ENCODE measurements at regions of chr5 and their contacts with region 1.

Region 1: GRCh38 chr5:13957032-13957645 is 12.7 kb upstream of the DNAH5 start:
- DNase-seq: peak; percentile 59
- H3K4me3 ChIP-seq: no peak overlapping the region
- H3K27ac ChIP-seq: no peak overlapping the region
- H3K4me1 ChIP-seq: no peaks in the 10 kb centered on the region
- H3K27me3 ChIP-seq: no peaks in the 10 kb centered on the region
- CTCF ChIP-seq: peak; percentile 77 to 80

Region 2: DNA sequence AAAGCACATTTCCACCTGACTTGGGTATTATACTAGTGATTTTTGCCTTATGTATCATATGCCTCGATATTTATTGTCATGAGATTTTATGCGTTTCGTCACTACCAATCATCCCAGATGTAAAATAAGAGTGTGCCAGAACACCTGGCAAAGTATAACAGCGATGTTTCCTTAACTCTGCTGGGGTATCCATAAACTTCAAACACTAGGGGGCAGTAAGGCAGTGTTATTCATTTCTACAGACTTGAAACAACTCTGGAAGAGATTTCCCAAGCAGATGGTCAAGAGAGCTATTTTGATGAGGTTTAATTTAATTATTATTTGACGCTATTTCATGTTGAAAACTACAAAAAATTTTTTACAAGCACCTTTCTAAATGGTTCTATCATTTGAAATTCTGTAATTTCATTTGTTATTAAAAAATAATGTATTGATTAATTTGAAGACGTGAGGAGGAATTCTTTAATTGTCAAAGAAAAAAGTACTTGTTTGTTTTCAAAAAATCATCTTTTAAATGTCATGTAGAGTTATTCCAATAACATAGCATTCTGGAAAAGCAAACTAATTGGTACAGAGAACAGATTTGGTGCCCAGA is 1664.4 kb before region 1 on chr5:
- CTCF ChIA-PET with region 1: no interaction called
- dilution Hi-C with region 1: no loop called
- in situ Hi-C with region 1: no loop called
- intact Hi-C with region 1: loop called (anchors 1 kb)
- DNase-seq: peak; percentile 6
- H3K4me3 ChIP-seq: no peak overlapping the region
- H3K27ac ChIP-seq: no peak overlapping the region
- H3K4me1 ChIP-seq: no peaks in the 10 kb centered on the region
- H3K27me3 ChIP-seq: no peaks in the 10 kb centered on the region
- CTCF ChIP-seq: peak; percentile 49 to 58

Region 3: GRCh38 chr5:12704955-12705354 is 1252.2 kb before region 1 on chr5:
- CTCF ChIA-PET with region 1: no interaction called
- dilution Hi-C with region 1: no loop called
- in situ Hi-C with region 1: no loop called
- intact Hi-C with region 1: loop called (anchors 5 kb)
- DNase-seq: peak; percentile 1
- H3K4me3 ChIP-seq: no peak overlapping the region
- H3K27ac ChIP-seq: no peak overlapping the region
- H3K4me1 ChIP-seq: no peaks in the 10 kb centered on the region
- H3K27me3 ChIP-seq: peaks cover 3% of the 10 kb centered on the region
- CTCF ChIP-seq: peak; percentile 33 to 63

Region 4: DNA sequence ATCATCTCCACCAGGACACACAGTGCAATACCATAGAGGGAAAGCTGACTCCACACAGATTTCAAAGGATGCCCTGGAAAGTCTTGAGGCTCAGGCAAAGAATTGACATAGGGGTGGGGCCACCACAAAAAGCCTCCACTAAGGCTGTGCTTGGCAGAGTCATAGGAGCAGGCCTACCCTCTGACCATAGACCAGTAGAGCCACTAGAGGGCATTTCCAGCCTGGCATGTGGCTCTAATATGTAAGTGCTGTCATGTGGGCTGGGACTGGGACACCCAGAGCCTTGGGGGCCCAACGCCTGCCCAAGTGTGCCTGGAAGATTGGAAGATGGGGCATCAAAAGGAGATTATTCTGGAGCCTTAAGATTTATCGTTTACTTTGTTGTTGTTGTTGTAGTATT is 738.6 kb before region 1 on chr5:
- CTCF ChIA-PET with region 1: no interaction called
- dilution Hi-C with region 1: no loop called
- in situ Hi-C with region 1: no loop called
- intact Hi-C with region 1: loop called (anchors 10 kb)
- DNase-seq: peak; percentile 29
- H3K4me3 ChIP-seq: no peak overlapping the region
- H3K27ac ChIP-seq: no peak overlapping the region
- H3K4me1 ChIP-seq: no peaks in the 10 kb centered on the region
- H3K27me3 ChIP-seq: no peaks in the 10 kb centered on the region
- CTCF ChIP-seq: peak; percentile 35 to 64

Region 5: DNA sequence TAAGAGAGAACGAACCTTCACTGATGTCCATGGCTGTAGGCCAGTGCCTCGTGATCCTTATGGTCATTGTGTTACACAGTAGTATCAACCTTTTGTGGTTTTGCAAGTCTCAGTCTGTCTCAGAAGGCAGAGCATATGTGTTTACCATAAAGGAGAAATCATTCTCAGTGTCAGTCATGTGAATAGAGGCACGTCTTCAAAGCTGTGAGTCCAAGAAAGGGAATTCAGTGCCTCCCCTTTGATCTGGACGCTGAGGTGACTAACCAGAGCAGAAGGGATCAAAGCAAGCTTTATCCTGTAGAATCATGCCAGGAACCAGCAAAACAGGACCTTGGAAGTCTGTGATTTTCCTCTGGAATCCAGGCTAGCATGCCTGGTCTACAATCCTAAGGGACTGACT is 446.5 kb before region 1 on chr5:
- CTCF ChIA-PET with region 1: interaction called, 3 read pairs
- dilution Hi-C with region 1: loop called (anchors 25 kb)
- in situ Hi-C with region 1: no loop called
- intact Hi-C with region 1: no loop called
- DNase-seq: peak; percentile 96
- H3K4me3 ChIP-seq: no peak overlapping the region
- H3K27ac ChIP-seq: peak overlapping the region; percentile 81
- H3K4me1 ChIP-seq: peaks cover 37% of the 10 kb centered on the region
- H3K27me3 ChIP-seq: no peaks in the 10 kb centered on the region
- CTCF ChIP-seq: no peak

Region 6: DNA sequence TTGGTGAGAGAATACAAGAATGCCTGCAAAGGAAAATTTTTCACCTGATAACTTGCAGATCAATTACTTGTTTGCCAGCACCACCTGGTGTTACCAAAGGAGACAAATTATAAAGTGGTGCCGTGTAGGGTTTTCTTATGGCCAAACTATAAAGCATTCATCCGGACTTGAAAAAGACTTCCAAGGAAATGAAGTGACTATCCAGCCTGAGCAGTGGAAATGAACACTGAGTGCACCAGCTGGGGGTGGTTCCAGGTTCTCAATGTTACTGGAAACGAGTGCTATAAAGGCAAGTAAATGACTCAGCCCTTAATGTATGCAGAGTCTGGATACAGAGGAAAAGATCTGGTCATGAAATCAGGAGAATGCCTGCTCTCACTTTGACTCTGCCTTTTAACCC is 125.8 kb before region 1 on chr5:
- CTCF ChIA-PET with region 1: no interaction called
- dilution Hi-C with region 1: no loop called
- in situ Hi-C with region 1: loop called in 1 of 2 experiments (anchors 10 kb)
- intact Hi-C with region 1: loop called (anchors 1 kb)
- DNase-seq: peak; percentile 74
- H3K4me3 ChIP-seq: no peak overlapping the region
- H3K27ac ChIP-seq: peak overlapping the region; percentile 64
- H3K4me1 ChIP-seq: peaks cover 23% of the 10 kb centered on the region
- H3K27me3 ChIP-seq: no peaks in the 10 kb centered on the region
- CTCF ChIP-seq: peak; percentile 20 to 49